Aorta (tissue), 5 donors: ENCODE measurements at regions of chr22 and their contacts with region 1.

Region 1: DNA sequence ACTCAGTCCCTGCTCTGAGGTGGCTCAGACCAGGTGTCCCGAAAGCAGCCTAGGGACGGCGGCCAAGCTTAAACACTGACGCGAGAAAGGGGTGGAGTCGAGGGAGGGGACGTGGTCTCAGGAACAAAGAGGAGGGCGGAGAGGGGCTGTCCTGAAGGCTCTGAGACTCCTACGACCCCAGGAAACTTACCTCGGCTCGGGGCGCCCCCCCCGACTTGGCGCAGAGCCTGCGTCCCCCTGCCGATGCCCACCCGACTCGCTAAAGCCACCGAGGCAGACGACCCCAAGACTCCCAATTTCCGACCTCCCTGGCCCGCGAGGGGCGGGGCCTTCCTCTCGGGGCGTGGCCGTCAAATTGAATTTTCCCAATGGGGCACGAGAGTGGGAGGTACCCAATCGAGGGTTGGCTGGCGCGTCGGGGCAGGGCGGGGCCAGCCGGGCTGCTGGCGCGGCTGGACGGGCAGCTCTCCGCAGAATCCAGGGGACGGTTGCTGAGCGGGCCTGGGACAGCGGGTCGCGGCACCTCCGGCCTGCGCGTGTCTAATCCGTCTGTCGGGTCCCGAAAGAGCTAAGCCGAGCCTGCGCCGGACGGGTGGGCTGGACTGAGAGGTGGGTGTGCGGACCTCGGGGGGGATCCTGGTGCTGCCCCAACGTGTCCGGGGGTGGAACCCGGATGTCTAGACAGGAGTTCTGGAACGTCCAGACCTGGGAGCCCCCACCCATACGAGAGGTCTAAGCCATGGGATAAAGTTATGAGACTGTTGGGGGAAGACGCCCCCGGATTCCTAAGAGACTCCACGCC is at the start of gene SMTN:
- DNase-seq: peak; percentile 94 to 98
- ATAC-seq: peak; percentile 87
- H3K4me3 ChIP-seq: peak within 1 kb of the TSS; percentile 87 to 89
- H3K27ac ChIP-seq: peak within 1 kb of the TSS; percentile 34 to 93
- H3K4me1 ChIP-seq: no peaks in the 10 kb centered on the region
- H3K27me3 ChIP-seq: no peaks in the 10 kb centered on the region
- total RNA-seq, gene SMTN: 588 to 1,240 TPM

Region 2: DNA sequence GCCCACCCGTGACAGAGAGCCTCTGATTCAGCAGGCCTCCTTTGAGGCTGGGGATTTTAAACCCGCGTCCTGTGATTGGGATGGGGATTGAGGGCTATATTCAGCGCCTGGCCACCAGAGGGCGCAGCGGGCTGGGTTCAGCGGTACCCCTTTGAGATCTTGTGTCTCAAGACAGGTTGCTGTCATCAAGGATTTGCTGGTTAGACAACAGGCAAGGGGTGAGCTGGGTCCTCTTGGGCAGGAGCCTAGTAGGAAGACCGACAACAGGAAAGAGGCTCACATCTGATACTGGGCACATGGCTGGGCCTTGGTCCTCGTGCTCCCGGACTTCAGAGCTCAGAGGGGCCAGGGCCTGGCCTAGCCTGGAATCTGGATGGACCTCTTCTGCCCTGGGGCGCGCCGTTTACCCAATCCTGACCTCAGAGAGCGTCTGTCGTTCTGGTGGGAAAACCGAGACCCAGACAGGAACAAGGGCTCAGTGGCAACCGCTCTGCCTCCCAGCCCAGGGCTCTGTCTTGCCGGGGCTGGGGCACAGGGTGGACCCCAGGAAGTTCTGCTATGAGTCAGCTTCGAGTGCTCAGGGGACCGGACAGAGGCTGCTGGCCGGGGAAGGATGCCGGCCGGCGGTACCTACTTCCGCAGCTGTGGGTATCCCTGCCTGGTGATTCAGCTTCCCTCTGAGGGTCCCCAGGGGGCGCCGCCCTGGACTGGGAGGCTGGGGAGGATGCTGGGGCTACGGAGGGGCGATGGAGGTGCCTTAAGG is 446.4 kb before region 1 on chr22:
- intact Hi-C with region 1: loop called in 1 of 2 experiments (anchors 10 kb)
- DNase-seq: peak; percentile 91 to 96
- ATAC-seq: peak; percentile 92
- H3K4me3 ChIP-seq: no peak overlapping the region
- H3K27ac ChIP-seq: peak overlapping the region; percentile 62 to 79
- H3K4me1 ChIP-seq: no peaks in the 10 kb centered on the region
- H3K27me3 ChIP-seq: no peaks in the 10 kb centered on the region

Region 3: DNA sequence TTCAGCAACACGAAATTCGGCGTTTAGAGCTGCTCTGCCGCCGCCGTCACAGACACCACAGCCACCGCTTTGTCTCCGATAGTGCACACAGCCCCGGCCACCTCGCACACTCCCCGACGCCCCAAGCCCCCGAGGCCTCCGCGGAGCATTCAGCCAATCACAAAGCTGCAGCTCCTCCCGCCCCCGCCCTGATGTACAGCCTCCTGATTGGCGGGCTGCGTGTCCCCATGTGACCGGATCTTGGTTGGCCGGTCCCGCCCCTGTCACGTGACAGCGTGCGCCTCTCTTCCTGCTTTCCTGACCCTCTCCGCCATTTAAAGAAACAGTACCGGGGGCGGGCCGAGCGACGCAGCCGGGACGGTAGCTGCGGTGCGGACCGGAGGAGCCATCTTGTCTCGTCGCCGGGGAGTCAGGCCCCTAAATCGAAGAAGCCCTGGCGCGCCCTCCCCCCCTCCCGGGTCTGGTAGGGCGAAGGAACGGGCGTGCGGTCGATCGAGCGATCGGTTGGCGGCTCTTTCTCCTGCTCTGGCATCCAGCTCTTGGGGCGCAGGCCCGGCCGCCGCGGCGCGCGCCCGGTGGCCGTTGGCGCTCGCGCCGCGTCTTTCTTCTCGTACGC is 112.0 kb before region 1 on chr22 and contains the start of gene TUG1:
- intact Hi-C with region 1: loop called (anchors 2 to 5 kb)
- DNase-seq: peak; percentile 99
- ATAC-seq: peak; percentile 99
- H3K4me3 ChIP-seq: peak within 1 kb of the TSS; percentile 70 to 83
- H3K27ac ChIP-seq: peak within 1 kb of the TSS; percentile 55 to 64
- H3K4me1 ChIP-seq: peaks cover 0 to 4% of the 10 kb centered on the region in 2 donors
- H3K27me3 ChIP-seq: no peaks in the 10 kb centered on the region
- total RNA-seq, gene TUG1: 86.1 to 89.4 TPM

Region 4: GRCh38 chr22:31044262-31044861 is 36.7 kb before region 1 on chr22:
- intact Hi-C with region 1: loop called (anchors 2 to 5 kb)
- DNase-seq: peak; percentile 86 to 93
- ATAC-seq: peak; percentile 83
- H3K4me3 ChIP-seq: no peak overlapping the region
- H3K27ac ChIP-seq: peak overlapping the region; percentile 6 to 66
- H3K4me1 ChIP-seq: no peaks in the 10 kb centered on the region
- H3K27me3 ChIP-seq: no peaks in the 10 kb centered on the region

Region 5: GRCh38 chr22:31148953-31149627 is 68.0 kb after region 1 on chr22:
- intact Hi-C with region 1: loop called in 1 of 2 experiments (anchors 5 kb)
- DNase-seq: peak; percentile 80 to 86
- ATAC-seq: peak; percentile 95
- H3K4me3 ChIP-seq: no peak overlapping the region
- H3K27ac ChIP-seq: peak overlapping the region; percentile 89 to 97
- H3K4me1 ChIP-seq: peaks cover 0 to 3% of the 10 kb centered on the region in 2 donors
- H3K27me3 ChIP-seq: no peaks in the 10 kb centered on the region